Thyroid gland (tissue), 4 donors: ENCODE measurements at regions of chr14 and their contacts with region 1.

Region 1: DNA sequence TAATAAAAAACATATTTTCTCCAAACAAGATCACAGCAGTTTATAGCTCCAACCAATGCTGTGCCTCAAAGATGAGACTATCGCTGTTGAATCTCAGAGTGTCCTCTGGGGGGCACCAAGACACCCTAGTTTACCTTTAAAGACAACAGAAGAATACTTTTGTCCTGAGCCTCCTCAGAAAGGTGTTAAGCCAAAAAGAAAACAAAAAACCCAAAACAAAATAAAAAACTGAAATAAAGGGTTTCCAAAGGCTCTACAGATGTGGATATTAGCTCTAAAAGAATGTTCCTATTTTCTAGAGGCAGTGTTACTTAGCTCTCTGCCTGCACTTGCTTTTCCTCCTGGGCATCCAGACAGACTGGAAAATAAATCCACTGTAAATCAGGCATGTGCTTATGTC is 86.9 kb upstream of the TTC7B start:
- DNase-seq: peak; percentile 53 to 68
- H3K4me3 ChIP-seq: no peak overlapping the region
- H3K27ac ChIP-seq: no peak overlapping the region
- H3K4me1 ChIP-seq: no peaks in the 10 kb centered on the region
- H3K27me3 ChIP-seq: no peaks in the 10 kb centered on the region
- CTCF ChIP-seq: peak; percentile 32 to 89 (median 69)
- POLR2A ChIP-seq: no peak

Region 2: GRCh38 chr14:90959344-90959743 is 56.2 kb after region 1 on chr14:
- intact Hi-C with region 1: no loop called
- DNase-seq: no peak
- H3K4me3 ChIP-seq: no peak overlapping the region
- H3K27ac ChIP-seq: no peak overlapping the region
- H3K4me1 ChIP-seq: no peaks in the 10 kb centered on the region
- H3K27me3 ChIP-seq: no peaks in the 10 kb centered on the region
- CTCF ChIP-seq: no peak
- POLR2A ChIP-seq: no peak

Region 3: DNA sequence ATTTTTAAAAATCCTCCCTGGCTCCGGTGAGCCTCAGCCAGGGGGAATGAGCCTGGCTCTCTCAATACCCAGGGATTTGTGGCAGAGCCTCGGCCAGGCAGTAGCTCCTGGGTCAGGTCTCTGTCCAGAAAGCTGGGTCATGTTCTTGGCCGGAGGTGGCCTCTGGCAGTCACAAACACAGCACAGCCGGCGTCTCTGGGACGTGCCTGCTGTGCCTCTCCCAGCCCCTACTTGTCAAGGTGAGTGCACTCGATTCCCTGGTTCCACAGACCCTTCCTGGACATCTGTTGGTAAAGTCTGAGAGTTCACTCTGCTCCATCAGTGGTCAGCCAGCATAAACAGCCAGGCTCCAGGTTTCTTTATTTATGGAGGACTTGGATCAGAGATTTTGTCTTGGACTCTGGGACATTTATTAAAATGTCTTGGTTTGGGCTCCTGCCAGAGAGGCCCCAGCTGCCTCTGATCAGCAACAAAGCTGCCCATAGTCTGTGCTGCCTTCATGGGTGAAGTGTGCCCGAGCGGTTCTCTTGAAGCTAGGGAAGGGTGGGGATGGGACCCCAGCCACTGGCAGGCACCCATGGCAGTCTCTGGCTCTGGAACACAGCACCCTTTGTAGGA is 267.5 kb after region 1 on chr14:
- intact Hi-C with region 1: loop called (anchors 2 kb)
- DNase-seq: peak; percentile 50 to 56
- H3K4me3 ChIP-seq: no peak overlapping the region
- H3K27ac ChIP-seq: peak overlapping the region in 2 of 3 donors; percentile 33 to 48
- H3K4me1 ChIP-seq: peaks cover 0 to 4% of the 10 kb centered on the region in 2 donors
- H3K27me3 ChIP-seq: no peaks in the 10 kb centered on the region
- CTCF ChIP-seq: no peak
- POLR2A ChIP-seq: no peak